Left colon (tissue), 2 donors: ENCODE measurements at regions of chr2 and their contacts with region 1.

Region 1: DNA sequence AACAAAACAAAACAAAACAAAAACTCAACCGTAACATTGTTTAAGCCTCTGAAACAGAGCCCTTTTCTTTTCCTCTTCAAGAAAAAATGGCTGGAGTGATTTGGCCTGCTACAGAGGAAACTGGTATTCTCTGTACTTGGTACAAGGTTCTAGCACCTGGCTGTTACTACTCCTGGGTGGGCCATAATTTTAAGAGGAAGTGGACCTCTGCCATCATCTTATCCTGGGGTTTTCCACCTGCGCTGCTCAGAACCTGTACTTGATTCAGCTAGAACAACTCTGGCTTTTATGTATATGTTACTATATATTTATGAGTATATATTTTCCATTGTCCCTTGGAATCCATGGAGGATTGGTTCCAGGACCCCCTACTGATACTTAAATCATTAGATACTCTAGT is 22.5 kb downstream of the SRSF7 start:
- DNase-seq: no peak
- ATAC-seq: no peak

Region 2: DNA sequence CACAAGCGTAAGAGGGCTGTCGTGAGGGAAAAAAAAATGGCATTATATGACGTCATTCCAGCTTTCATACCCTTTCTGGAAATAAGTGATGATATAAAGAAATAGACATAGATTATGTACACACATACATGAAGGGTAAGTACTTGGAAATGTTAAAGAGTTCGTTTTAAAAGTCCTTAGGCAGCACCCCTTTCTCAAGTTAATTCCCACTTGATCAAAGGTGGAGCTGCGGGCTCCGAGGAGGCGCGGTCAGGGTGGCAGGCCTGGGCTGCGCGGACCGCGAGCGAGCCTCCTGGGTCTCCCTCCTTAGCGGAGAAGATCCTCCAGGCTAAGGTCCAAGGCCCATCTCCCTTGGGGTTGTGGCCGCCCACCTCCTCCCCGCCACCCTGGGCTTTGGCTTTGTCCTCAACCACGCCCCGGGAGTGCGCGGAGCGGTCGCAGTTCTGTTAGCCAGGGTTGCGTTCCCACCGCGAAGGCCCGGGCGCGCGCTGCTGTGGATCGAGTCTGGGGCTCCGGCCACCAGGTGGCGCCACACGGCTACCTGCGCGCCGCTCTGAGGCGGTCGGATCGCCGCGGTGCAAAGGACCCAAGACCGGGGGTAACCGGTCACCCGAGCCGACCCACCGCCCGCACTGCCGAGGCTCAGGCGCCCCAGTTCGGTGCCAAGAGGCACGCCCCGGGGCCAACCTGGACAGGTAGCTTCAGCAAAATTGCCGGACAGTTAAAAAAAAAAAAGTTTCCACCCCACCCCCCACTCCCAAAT is 192.8 kb before region 1 on chr2:
- intact Hi-C with region 1: loop called in 1 of 2 experiments (anchors 5 kb)
- DNase-seq: peak; percentile 73 to 93
- ATAC-seq: peak; percentile 82

Region 3: DNA sequence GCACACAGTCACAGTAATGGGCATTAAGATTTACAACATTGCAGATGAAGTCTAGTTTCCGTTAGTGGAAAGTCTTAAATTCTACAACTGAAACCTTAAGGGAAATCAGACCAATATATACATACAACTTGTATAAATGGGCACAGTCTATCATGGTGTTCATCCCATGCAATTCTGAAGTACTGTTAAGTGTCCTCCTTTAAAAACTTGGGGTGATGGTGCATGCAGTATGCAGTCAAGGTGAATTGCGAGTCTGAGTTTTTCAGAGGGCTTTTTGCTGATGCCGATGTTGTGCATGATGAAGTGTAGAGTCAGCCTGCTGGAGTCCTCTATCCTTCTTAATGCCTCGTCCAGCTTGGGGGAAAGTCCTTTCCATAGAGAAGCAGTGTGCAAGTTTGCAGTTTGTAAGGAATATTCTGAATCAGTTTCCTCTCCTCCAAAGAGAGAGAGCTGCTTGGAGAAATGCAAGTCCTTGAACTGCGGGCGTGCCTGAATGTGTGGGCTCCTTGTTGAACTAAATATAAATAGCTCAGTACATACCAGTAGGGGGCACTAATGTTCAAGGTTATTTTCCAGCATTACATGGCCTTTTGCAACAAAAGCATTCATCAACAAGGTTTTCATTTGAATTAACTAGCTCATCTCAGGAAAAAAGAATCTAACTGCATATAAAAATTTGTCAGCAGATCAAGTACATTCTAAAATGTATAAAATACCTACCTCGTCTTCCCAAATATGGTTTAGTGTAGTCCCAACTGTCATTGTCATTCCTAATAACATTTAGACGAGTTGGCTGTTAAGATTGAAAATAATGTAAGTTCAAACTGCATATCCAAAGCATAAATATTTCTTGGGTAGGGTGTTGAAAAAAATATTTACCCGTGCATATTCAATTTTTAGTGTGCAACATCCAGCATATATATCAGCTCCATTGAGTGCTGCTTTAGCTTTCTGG is 147.2 kb before region 1 on chr2:
- intact Hi-C with region 1: loop called in 1 of 2 experiments (anchors 5 kb)
- DNase-seq: peak; percentile 29 to 38
- ATAC-seq: peak; percentile 78

Region 4: GRCh38 chr2:38740851-38741731 is 12.4 kb after region 1 on chr2:
- intact Hi-C with region 1: loop called in 1 of 2 experiments (anchors 2 kb)
- DNase-seq: peak in 1 of 2 donors; percentile 35
- ATAC-seq: peak; percentile 73

Region 5: GRCh38 chr2:38835015-38835601 is 106.4 kb after region 1 on chr2:
- intact Hi-C with region 1: no loop called
- DNase-seq: no peak
- ATAC-seq: no peak